Heart left ventricle (tissue), 16 donors: ENCODE measurements at regions of chr1 and their contacts with region 1.

Region 1: DNA sequence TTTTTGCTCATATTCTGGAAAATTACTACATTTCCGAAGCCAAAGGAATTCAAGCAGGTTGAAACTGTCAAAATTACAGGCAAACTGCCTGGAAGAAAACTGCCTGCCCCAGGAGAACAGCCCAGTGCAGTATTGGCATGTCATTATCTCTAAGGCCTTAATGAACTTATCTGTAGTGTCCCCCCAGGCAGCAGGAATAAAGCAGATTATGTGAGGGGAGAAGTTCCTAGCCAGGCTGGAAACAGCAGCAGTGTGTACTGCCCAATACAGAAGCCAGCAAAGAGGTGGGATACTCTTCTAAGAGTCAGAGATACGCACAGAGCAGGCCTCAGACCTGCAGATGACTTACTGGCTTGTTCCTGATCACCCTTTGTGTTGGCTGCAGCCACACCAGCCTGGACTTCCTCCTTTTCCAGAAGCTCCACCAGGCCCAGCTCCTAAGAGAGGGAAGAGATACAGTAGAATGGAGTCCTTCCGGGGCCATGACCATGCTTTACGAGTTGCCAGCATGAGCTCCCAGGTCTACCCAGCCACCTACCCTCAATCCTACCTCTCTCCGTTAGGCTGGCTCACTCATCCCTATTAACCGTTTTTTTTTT is 11.7 kb downstream of the IQGAP3 start:
- DNase-seq: peak in 1 of 5 donors; percentile 34
- ATAC-seq: peak in 2 of 4 donors; percentile 42 to 55
- H3K4me3 ChIP-seq: no peak overlapping the region
- H3K27ac ChIP-seq: no peak overlapping the region
- H3K4me1 ChIP-seq: peaks cover 0 to 4% (median 0%) of the 10 kb centered on the region in 12 donors
- H3K27me3 ChIP-seq: no peaks in the 10 kb centered on the region
- CTCF ChIP-seq: no peak
- POLR2A ChIP-seq: no peak

Region 2: GRCh38 chr1:156499842-156500546 is 60.7 kb before region 1 on chr1:
- intact Hi-C with region 1: no loop called
- DNase-seq: peak; percentile 82 to 88 (median 83)
- ATAC-seq: peak in 3 of 4 donors; percentile 1 to 29 (median 21)
- H3K4me3 ChIP-seq: peak overlapping the region; percentile 69 to 100 (median 95)
- H3K27ac ChIP-seq: peak overlapping the region; percentile 98 to 100 (median 100)
- H3K4me1 ChIP-seq: peaks cover 41 to 80% (median 72%) of the 10 kb centered on the region in 12 donors
- H3K27me3 ChIP-seq: no peaks in the 10 kb centered on the region
- CTCF ChIP-seq: no peak
- POLR2A ChIP-seq: no peak

Region 3: DNA sequence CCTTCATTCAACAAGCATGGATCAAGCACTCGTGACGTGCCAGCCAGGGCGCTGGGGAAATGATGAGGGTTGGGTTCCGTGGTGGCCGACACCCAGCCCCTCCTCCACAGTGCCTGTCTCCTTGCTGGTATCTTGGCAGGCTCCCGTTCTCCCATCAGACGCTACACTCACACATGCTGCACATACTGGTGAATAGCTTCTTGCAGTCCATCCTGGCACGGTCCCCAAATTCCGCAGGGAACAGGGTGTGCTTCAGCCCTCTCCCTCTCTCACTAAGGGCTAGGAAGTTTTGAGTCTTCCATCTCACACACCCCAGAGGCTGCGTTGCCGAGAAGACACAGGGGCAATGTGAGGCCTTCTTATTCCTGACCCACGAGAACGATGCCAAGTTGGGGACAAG is 50.0 kb before region 1 on chr1:
- intact Hi-C with region 1: loop called in 2 of 10 experiments (anchors 5 to 10 kb)
- DNase-seq: peak; percentile 81 to 95 (median 86)
- ATAC-seq: peak; percentile 66 to 79 (median 74)
- H3K4me3 ChIP-seq: no peak overlapping the region
- H3K27ac ChIP-seq: peak overlapping the region; percentile 60 to 100 (median 98)
- H3K4me1 ChIP-seq: peaks cover 3 to 46% (median 33%) of the 10 kb centered on the region in 12 donors
- H3K27me3 ChIP-seq: no peaks in the 10 kb centered on the region
- CTCF ChIP-seq: no peak
- POLR2A ChIP-seq: no peak

Region 4: DNA sequence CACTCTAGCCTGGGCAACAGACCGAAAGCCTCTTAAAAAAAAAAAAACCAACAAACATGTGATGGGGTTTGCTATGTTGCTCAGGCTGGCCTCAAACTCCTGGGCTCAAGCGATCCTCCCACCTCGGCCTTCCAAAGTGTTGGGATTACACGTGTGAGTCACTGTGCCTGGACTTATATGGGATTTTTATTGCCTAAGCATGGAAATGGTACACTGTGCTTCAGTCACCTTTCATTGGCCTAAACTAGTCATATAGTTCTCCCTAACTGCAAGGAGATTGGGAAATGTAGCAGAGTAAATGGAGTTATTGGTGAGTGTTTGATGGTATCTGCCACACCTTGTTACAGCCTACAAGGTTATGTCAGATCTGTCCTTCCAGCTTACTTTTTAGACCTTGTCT is 42.9 kb before region 1 on chr1:
- intact Hi-C with region 1: loop called in 2 of 10 experiments (anchors 5 to 10 kb)
- DNase-seq: no peak
- ATAC-seq: no peak
- H3K4me3 ChIP-seq: no peak overlapping the region
- H3K27ac ChIP-seq: no peak overlapping the region
- H3K4me1 ChIP-seq: no peaks in the 10 kb centered on the region
- H3K27me3 ChIP-seq: no peaks in the 10 kb centered on the region
- CTCF ChIP-seq: no peak
- POLR2A ChIP-seq: no peak

Region 5: GRCh38 chr1:156525071-156525501 is 35.6 kb before region 1 on chr1:
- intact Hi-C with region 1: loop called in 1 of 10 experiments (anchors 5 kb)
- DNase-seq: no peak
- ATAC-seq: peak in 2 of 4 donors; percentile 4 to 28
- H3K4me3 ChIP-seq: peak overlapping the region in 1 of 12 donors; percentile 15
- H3K27ac ChIP-seq: peak overlapping the region in 1 of 12 donors; percentile 58
- H3K4me1 ChIP-seq: peaks cover 0 to 25% (median 10%) of the 10 kb centered on the region in 12 donors
- H3K27me3 ChIP-seq: no peaks in the 10 kb centered on the region
- CTCF ChIP-seq: no peak
- POLR2A ChIP-seq: no peak

Region 6: GRCh38 chr1:156540791-156541383 is 19.8 kb before region 1 on chr1:
- intact Hi-C with region 1: loop called in 1 of 10 experiments (anchors 2 kb)
- DNase-seq: no peak
- ATAC-seq: peak in 3 of 4 donors; percentile 48 to 59 (median 54)
- H3K4me3 ChIP-seq: no peak overlapping the region
- H3K27ac ChIP-seq: no peak overlapping the region
- H3K4me1 ChIP-seq: peaks cover 0 to 7% (median 0%) of the 10 kb centered on the region in 12 donors
- H3K27me3 ChIP-seq: no peaks in the 10 kb centered on the region
- CTCF ChIP-seq: no peak
- POLR2A ChIP-seq: no peak